K562 (cell line): ENCODE measurements at regions of chr7 and their contacts with region 1.

Region 1: GRCh38 chr7:116809636-116810266 is 52.6 kb upstream of the CAPZA2 start:
- DNase-seq: peak; percentile 41 to 82 (median 54)
- ATAC-seq: peak; percentile 96
- H3K4me3 ChIP-seq: no peak overlapping the region
- H3K27ac ChIP-seq: no peak overlapping the region
- H3K4me1 ChIP-seq: no peaks in the 10 kb centered on the region
- H3K27me3 ChIP-seq: peaks cover 9 to 19% of the 10 kb centered on the region in 2 experiments; a peak in 4 of 5 replicates
- CTCF ChIP-seq: peak; percentile 65 to 89 (median 71)
- EP300 ChIP-seq: no peak
- POLR2A ChIP-seq: no peak
- RAD21 ChIP-seq: peak; percentile 92 to 97

Region 2: GRCh38 chr7:116138202-116138801 is 671.4 kb before region 1 on chr7:
- CTCF ChIA-PET with region 1: interaction called, 5 read pairs
- POLR2A ChIA-PET with region 1: no interaction called
- in situ Hi-C with region 1: no loop called
- intact Hi-C with region 1: loop called (anchors 1 kb)
- DNase-seq: peak; percentile 52 to 70 (median 58)
- ATAC-seq: peak; percentile 97
- H3K4me3 ChIP-seq: no peak overlapping the region
- H3K27ac ChIP-seq: no peak overlapping the region
- H3K4me1 ChIP-seq: no peaks in the 10 kb centered on the region
- H3K27me3 ChIP-seq: no peaks in the 10 kb centered on the region
- CTCF ChIP-seq: peak; percentile 61 to 84 (median 76)
- EP300 ChIP-seq: no peak
- POLR2A ChIP-seq: no peak
- RAD21 ChIP-seq: peak; percentile 83 to 86

Region 3: DNA sequence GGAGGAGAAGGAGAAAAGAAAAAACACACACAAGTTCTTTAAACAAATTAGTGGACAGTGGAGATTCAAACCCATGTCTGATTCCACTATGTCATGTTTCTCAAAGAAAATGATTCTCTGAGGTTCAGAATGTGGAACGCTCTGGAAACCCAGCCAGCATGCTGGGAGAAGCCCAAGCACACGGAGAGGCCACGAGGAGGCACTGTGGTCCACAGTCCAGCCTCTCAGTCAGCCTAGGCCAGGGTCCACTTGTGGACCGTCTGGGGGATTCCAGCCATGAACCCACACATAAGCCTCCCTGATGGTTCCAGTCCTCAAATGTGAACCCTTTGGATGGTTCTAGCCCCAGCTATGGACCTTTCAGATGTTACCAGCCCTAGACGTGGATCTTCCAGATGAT is 211.5 kb before region 1 on chr7:
- CTCF ChIA-PET with region 1: interaction called, 37 read pairs
- POLR2A ChIA-PET with region 1: interaction called, 4 read pairs
- in situ Hi-C with region 1: loop called (anchors 5 kb)
- intact Hi-C with region 1: loop called (anchors 1 kb)
- DNase-seq: peak; percentile 36 to 65 (median 48)
- ATAC-seq: peak; percentile 98
- H3K4me3 ChIP-seq: no peak overlapping the region
- H3K27ac ChIP-seq: no peak overlapping the region
- H3K4me1 ChIP-seq: no peaks in the 10 kb centered on the region
- H3K27me3 ChIP-seq: peaks cover 7 to 15% of the 10 kb centered on the region in 2 experiments; a peak in 3 of 5 replicates
- CTCF ChIP-seq: peak; percentile 76 to 95 (median 89)
- EP300 ChIP-seq: no peak
- POLR2A ChIP-seq: no peak
- RAD21 ChIP-seq: peak; percentile 89 to 92

Region 4: GRCh38 chr7:116671681-116672595 is 137.8 kb before region 1 on chr7 and contains the start of gene MET:
- CTCF ChIA-PET with region 1: interaction called, 32 read pairs
- POLR2A ChIA-PET with region 1: no interaction called
- in situ Hi-C with region 1: no loop called
- intact Hi-C with region 1: loop called (anchors 1 kb)
- DNase-seq: peak; percentile 42 to 80 (median 62)
- ATAC-seq: peak; percentile 98
- H3K4me3 ChIP-seq: peak within 1 kb of the TSS; percentile 1; the same call in 1 of the 2 replicates
- H3K27ac ChIP-seq: no peak within 1 kb of the TSS
- H3K4me1 ChIP-seq: peaks cover 0 to 11% of the 10 kb centered on the region in 2 experiments; a peak in 2 of 5 replicates
- H3K27me3 ChIP-seq: peaks cover 16 to 28% of the 10 kb centered on the region in 2 experiments
- CTCF ChIP-seq: peak; percentile 68 to 83 (median 74)
- EP300 ChIP-seq: no peak
- POLR2A ChIP-seq: no peak
- RAD21 ChIP-seq: peak; percentile 83 to 87
- polyA plus RNA-seq, gene MET: 1.3 to 1.5 TPM

Region 5: DNA sequence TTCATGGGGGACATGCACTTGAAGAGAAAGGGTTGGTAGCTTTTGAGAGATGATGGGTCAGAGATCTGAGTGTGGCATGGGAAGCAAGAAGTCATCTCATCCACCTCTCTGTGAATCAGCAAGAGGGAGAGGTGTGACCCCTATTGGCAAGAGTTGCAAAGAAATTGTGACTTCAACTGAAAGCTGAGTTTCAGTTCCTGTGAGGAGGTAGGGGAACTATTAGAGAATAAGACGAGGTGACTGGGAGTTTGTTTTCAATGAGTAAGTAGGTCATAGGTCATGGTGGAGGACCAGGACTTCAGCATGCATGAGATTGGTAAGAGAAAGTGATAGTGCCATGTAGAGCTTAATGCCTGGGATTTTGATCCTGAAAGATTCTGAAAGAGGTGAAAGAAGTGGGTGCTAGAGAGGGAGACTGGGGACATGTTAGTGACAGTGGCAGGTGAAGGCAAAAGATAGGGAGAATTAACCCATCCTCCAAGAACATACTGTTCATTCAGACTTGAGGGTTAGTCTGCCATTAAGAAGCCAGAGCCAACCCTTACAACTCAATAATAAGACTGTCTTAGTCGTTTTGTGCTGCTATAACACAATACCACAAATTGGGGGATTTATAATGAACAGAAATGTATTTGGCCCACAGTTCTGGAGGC is 22.8 kb before region 1 on chr7:
- CTCF ChIA-PET with region 1: no interaction called
- POLR2A ChIA-PET with region 1: no interaction called
- in situ Hi-C with region 1: no loop called
- intact Hi-C with region 1: no loop called
- DNase-seq: peak in 1 of 4 experiments; percentile 18
- ATAC-seq: peak; percentile 67; the same call in 2 of the 3 replicates
- H3K4me3 ChIP-seq: no peak overlapping the region
- H3K27ac ChIP-seq: no peak overlapping the region
- H3K4me1 ChIP-seq: no peaks in the 10 kb centered on the region
- H3K27me3 ChIP-seq: peaks cover 5 to 8% of the 10 kb centered on the region in 2 experiments; a peak in 3 of 5 replicates
- CTCF ChIP-seq: peak; percentile 31 to 66 (median 41); a peak in 4 of 6 replicates
- EP300 ChIP-seq: no peak
- POLR2A ChIP-seq: no peak
- RAD21 ChIP-seq: peak; percentile 68 to 73

Region 6: DNA sequence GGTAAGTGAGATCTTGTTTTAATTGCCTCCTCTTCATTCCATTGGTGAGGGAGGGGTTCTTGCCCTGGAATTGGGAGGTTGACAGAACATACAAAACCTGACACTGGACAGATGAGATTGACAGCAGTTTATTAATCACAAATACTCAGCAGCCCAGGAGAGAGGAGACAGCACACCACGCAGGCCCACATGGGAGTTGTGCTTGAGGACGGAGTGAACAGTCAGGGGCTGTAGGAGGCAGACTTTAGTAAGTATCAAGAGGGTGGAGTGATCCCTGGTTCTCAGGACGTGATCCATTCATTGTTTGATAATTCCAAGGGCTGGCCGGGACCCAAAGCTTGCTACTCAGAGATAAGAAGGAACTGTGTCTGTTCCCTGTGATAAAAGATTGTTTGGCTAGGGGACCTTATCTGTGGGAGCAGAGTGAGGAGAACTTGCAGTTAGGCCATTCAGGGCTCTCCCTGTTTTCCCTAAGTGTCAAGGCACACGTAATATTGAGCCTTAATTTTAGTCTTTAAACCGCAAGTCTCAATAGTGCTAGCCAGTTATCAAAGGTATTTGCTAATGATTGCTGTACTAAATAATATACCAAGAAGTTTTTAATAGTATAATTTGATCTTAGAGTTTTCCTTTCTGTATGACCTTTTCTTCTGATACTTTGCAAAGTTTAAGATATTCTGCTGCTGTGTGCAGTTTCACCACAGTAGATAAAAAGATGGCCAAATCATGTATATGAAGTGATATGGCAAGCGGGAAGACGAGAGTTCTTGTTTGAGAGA is 67.1 kb after region 1 on chr7:
- CTCF ChIA-PET with region 1: no interaction called
- POLR2A ChIA-PET with region 1: no interaction called
- in situ Hi-C with region 1: no loop called
- intact Hi-C with region 1: loop called (anchors 2 kb)
- DNase-seq: peak; percentile 88 to 99 (median 92)
- ATAC-seq: peak; percentile 99
- H3K4me3 ChIP-seq: no peak overlapping the region; the same call in 1 of the 2 replicates
- H3K27ac ChIP-seq: peak overlapping the region; percentile 64
- H3K4me1 ChIP-seq: peaks cover 14 to 34% of the 10 kb centered on the region in 2 experiments
- H3K27me3 ChIP-seq: no peaks in the 10 kb centered on the region
- CTCF ChIP-seq: peak; percentile 68 to 83 (median 80)
- EP300 ChIP-seq: peak; percentile 100
- POLR2A ChIP-seq: no peak
- RAD21 ChIP-seq: peak; percentile 42 to 70; a peak in 3 of 4 replicates